B cell (primary cell): ENCODE measurements at regions of chr20 and their contacts with region 1.

Region 1: GRCh38 chr20:48359697-48360336 is 468.0 kb downstream of the PREX1 start:
- DNase-seq: peak; percentile 93
- ATAC-seq: peak; percentile 85
- H3K4me3 ChIP-seq: peak overlapping the region in 4 of 5 experiments; percentile 44 to 62 (median 53)
- H3K4me3 Mint-ChIP-seq: peak overlapping the region; percentile 91
- H3K27ac ChIP-seq: peak overlapping the region; percentile 94 to 96
- H3K27ac Mint-ChIP-seq: peak overlapping the region; percentile 96
- H3K4me1 ChIP-seq: peaks cover 34 to 57% of the 10 kb centered on the region in 2 donors
- H3K4me1 Mint-ChIP-seq: peaks cover 52% of the 10 kb centered on the region
- H3K27me3 ChIP-seq: no peaks in the 10 kb centered on the region
- H3K27me3 Mint-ChIP-seq: no peaks in the 10 kb centered on the region
- CTCF ChIP-seq: no peak

Region 2: DNA sequence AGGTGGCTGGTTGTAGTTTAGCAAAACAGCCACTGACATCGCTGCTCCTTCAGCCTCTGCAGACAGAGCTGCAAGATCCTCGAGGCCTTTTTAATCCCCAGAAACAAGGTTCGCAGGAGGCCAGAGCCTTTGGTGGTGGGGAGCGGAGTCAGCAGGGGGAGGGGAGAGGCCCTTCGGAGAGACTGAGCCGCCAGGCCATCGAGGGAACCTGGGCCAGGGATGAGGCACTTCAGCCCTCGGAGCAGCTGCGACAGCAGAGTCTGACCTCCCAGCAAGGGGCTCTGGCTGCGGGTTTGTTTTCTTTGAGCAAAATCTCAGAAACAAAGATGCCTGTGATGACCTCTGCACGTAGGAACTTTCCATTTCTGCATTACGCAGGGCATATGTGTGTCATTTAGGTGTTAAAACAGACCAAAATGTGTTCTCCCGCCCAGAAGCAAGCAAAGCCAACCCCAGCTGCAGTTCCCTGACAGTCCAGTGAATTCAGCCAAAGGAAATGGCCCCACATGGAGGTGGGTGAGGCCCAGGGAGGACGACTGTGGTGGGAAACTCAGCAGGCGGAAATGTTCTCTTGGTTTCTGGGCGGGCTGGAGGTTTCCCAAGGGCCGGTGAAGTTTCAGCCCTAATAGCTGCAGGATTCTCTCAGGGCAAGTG is 403.3 kb before region 1 on chr20:
- CTCF ChIA-PET with region 1: no interaction called
- POLR2A ChIA-PET with region 1: no interaction called
- intact Hi-C with region 1: no loop called
- DNase-seq: no peak
- ATAC-seq: no peak
- H3K4me3 ChIP-seq: no peak overlapping the region
- H3K4me3 Mint-ChIP-seq: no peak overlapping the region
- H3K27ac ChIP-seq: no peak overlapping the region
- H3K27ac Mint-ChIP-seq: no peak overlapping the region
- H3K4me1 ChIP-seq: no peaks in the 10 kb centered on the region
- H3K4me1 Mint-ChIP-seq: no peaks in the 10 kb centered on the region
- H3K27me3 ChIP-seq: peaks cover 0 to 4% (median 0%) of the 10 kb centered on the region in 4 experiments
- H3K27me3 Mint-ChIP-seq: peaks cover 41% of the 10 kb centered on the region
- CTCF ChIP-seq: no peak

Region 3: GRCh38 chr20:48075741-48076488 is 283.9 kb before region 1 on chr20:
- CTCF ChIA-PET with region 1: no interaction called
- POLR2A ChIA-PET with region 1: no interaction called
- intact Hi-C with region 1: no loop called
- DNase-seq: no peak
- ATAC-seq: no peak
- H3K4me3 ChIP-seq: no peak overlapping the region
- H3K4me3 Mint-ChIP-seq: no peak overlapping the region
- H3K27ac ChIP-seq: no peak overlapping the region
- H3K27ac Mint-ChIP-seq: no peak overlapping the region
- H3K4me1 ChIP-seq: no peaks in the 10 kb centered on the region
- H3K4me1 Mint-ChIP-seq: no peaks in the 10 kb centered on the region
- H3K27me3 ChIP-seq: peaks cover 0 to 3% (median 0%) of the 10 kb centered on the region in 4 experiments
- H3K27me3 Mint-ChIP-seq: peaks cover 28% of the 10 kb centered on the region
- CTCF ChIP-seq: no peak

Region 4: GRCh38 chr20:48329635-48330277 is 30.1 kb before region 1 on chr20:
- CTCF ChIA-PET with region 1: no interaction called
- POLR2A ChIA-PET with region 1: interaction called, 10 read pairs
- intact Hi-C with region 1: no loop called
- DNase-seq: no peak
- ATAC-seq: peak; percentile 31
- H3K4me3 ChIP-seq: no peak overlapping the region
- H3K4me3 Mint-ChIP-seq: no peak overlapping the region
- H3K27ac ChIP-seq: no peak overlapping the region
- H3K27ac Mint-ChIP-seq: no peak overlapping the region
- H3K4me1 ChIP-seq: no peaks in the 10 kb centered on the region
- H3K4me1 Mint-ChIP-seq: no peaks in the 10 kb centered on the region
- H3K27me3 ChIP-seq: peaks cover 0 to 14% (median 0%) of the 10 kb centered on the region in 4 experiments
- H3K27me3 Mint-ChIP-seq: peaks cover 25% of the 10 kb centered on the region
- CTCF ChIP-seq: no peak

Region 5: DNA sequence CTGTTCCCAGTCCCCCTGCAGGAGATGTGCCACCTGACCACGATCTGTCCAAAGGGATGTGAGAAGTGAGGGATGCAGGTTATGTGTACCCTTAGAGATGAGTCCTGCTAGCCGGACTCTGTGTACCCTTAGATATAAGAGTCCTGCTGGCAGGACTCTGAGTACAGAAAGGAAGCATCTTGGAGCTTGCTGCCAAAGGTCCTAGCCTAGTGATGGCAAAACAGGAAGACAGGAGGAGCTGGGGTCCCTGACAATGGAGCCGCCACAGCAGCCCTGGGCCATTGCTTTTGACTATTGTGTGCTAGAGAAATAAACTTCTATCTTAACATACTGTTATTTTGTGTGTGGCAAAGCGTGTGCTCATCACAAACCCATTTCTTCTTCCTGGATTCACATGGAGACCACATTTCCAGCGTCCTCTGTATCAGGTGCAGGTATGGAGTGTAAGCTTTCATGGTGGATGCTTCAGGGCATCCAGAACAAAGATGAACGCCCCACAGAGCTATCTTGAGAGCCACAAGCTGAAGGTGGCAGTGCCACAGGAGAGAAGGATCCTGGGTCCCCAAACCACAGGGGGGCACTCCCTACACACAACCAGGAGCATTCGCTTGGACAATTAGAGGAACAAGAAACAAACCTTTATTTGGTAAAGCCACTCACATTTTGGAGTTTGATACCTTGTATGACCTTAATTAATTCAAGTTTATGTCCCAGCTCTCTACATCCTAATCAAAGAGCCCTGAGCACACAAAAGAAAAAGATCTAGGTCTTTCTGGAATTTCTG is 61.5 kb after region 1 on chr20:
- CTCF ChIA-PET with region 1: no interaction called
- POLR2A ChIA-PET with region 1: no interaction called
- intact Hi-C with region 1: loop called (anchors 5 kb)
- DNase-seq: no peak
- ATAC-seq: no peak
- H3K4me3 ChIP-seq: no peak overlapping the region
- H3K4me3 Mint-ChIP-seq: no peak overlapping the region
- H3K27ac ChIP-seq: no peak overlapping the region
- H3K27ac Mint-ChIP-seq: no peak overlapping the region
- H3K4me1 ChIP-seq: peaks cover 16 to 25% of the 10 kb centered on the region in 2 donors
- H3K4me1 Mint-ChIP-seq: peaks cover 23% of the 10 kb centered on the region
- H3K27me3 ChIP-seq: peaks cover 0 to 12% (median 1%) of the 10 kb centered on the region in 4 experiments
- H3K27me3 Mint-ChIP-seq: peaks cover 42% of the 10 kb centered on the region
- CTCF ChIP-seq: no peak